Activated T-helper 1 cell treated with anti-CD3 and anti-CD28 coated beads, Interleukin-12 subunit alpha, Interleukin-12 subunit beta, Interleukin-2, Interleukin-4 antibody, amounts not matched to agents 30 ng/mL and 10 ng/mL and 1 ng/mL, durations not matched to agents 14 hours and 24 hours and 36 hours (primary cell): ENCODE measurements at regions of chr12 and their contacts with region 1.

Region 1: GRCh38 chr12:25436203-25437030 is 116.7 kb downstream of the LMNTD1 start:
- DNase-seq: peak; percentile 25
- H3K4me3 Mint-ChIP-seq: peak overlapping the region; percentile 24
- H3K27ac Mint-ChIP-seq: peak overlapping the region; percentile 33
- H3K4me1 Mint-ChIP-seq: peaks cover 7% of the 10 kb centered on the region
- H3K27me3 Mint-ChIP-seq: peaks cover 4% of the 10 kb centered on the region

Region 2: DNA sequence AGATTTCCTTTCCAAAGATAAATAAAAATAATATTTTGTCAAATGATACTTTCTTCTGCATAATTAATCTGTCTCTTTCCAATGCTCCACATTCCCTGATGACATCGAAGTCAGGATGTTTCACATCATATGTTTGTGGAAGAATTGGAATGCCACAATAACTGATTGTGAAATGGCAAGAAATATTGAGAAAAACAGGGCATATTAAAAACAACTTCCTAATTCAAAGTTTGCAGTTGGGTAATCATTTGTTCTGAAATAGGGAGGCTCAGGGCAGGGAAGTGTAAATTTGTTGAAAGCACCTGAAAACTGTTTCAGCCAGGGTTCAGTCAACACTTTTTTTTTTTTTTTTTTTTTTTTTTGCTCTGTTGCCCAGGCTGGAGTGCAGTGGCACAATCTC is 538.2 kb before region 1 on chr12:
- intact Hi-C with region 1: no loop called
- DNase-seq: no peak
- H3K4me3 Mint-ChIP-seq: no peak overlapping the region
- H3K27ac Mint-ChIP-seq: no peak overlapping the region
- H3K4me1 Mint-ChIP-seq: peaks cover 39% of the 10 kb centered on the region
- H3K27me3 Mint-ChIP-seq: no peaks in the 10 kb centered on the region

Region 3: GRCh38 chr12:25557830-25558436 is 121.5 kb after region 1 on chr12:
- intact Hi-C with region 1: loop called (anchors 1 kb)
- DNase-seq: no peak
- H3K4me3 Mint-ChIP-seq: no peak overlapping the region
- H3K27ac Mint-ChIP-seq: no peak overlapping the region
- H3K4me1 Mint-ChIP-seq: no peaks in the 10 kb centered on the region
- H3K27me3 Mint-ChIP-seq: peaks cover 10% of the 10 kb centered on the region

Region 4: DNA sequence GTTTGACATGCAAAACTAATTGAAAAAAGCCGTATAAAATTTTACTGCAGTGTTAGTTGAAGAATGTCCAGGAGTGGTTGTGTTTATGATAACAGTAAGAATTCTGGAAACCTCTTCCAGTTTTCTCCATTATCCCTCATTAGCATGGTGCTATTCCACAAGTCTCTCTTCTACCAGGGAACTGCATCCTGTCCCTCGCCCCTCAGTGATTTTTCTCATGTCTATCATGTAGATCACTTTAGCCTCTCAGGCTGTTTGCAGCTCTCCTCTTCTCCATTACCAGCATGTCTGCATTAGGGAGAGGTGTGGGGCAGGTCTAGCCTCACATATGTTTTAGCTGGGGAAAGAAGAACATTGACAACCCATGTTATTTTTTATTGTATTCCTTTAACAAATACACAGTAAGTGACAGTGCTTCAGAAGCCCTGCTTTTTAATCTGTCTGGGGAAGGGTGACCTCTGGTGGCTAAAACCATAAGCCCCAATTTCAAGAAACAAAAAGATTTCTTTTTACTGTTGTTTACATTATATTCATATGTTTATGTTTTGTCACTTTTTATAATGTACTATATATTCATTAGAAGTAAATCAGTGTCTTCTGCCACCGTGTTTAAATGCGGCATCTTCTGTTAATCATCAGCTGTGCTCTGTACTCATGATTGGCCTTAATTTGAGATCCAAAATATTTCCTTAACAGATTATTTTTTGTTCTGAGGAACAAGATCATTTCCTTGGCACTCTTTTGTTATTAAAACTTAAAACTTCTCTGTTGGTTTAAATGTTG is 592.7 kb after region 1 on chr12:
- intact Hi-C with region 1: loop called (anchors 1 kb)
- DNase-seq: no peak
- H3K4me3 Mint-ChIP-seq: no peak overlapping the region
- H3K27ac Mint-ChIP-seq: no peak overlapping the region
- H3K4me1 Mint-ChIP-seq: no peaks in the 10 kb centered on the region
- H3K27me3 Mint-ChIP-seq: peaks cover 11% of the 10 kb centered on the region

Region 5: GRCh38 chr12:26651566-26652188 is 1215.3 kb after region 1 on chr12:
- intact Hi-C with region 1: loop called (anchors 10 kb)
- DNase-seq: peak; percentile 14
- H3K4me3 Mint-ChIP-seq: no peak overlapping the region
- H3K27ac Mint-ChIP-seq: no peak overlapping the region
- H3K4me1 Mint-ChIP-seq: peaks cover 10% of the 10 kb centered on the region
- H3K27me3 Mint-ChIP-seq: no peaks in the 10 kb centered on the region